ENCODE measurements at regions of chr14 and their contacts with region 1.

Region 1: DNA sequence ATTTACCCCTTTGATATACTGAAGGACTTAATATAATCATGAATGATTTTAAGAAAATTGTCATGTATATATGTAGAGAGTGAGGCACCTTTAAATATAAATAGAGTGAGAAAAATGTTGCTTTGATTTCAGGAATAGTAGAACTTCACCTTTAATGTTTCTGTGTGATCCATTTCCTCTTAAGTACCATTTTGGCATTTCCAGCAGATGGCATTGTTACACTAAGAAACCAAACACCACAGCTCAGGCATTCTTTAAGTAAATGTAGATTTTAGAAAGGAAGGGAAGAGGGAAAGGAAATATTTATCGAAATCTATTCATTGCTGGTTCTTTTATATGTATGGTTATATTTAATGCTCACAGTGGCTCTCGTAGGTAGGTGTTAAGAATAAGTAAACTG is 556.7 kb upstream of the FBXO33 start:
- DNase-seq: peak; percentile 43
- ATAC-seq: no peak
- H3K4me3 ChIP-seq: no peak overlapping the region
- H3K27ac ChIP-seq: no peak overlapping the region
- H3K4me1 ChIP-seq: no peaks in the 10 kb centered on the region
- H3K27me3 ChIP-seq: no peaks in the 10 kb centered on the region
- CTCF ChIP-seq: peak; percentile 19 to 59 (median 34); a peak in 4 of 6 replicates
- POLR2A ChIP-seq: no peak
- RAD21 ChIP-seq: peak; percentile 71

Region 2: DNA sequence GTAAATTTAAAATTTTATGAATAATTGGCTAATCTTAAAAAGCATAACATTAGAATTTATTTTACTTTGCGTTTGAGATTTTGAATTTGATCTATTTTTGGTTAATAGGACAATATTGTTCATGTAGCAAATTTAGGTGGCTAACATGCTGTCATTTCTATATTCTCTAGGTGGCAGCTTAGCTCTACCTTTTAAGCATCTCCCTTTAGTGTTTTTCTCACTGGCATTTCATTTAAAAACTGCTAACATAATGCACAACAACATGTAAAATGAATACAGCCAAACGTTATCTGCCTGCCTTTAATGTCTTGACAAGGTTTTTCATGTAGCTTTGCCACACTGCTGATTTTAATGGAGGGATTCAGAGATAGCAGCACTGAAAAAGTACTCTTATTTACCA is 284.3 kb before region 1 on chr14:
- CTCF ChIA-PET with region 1: no interaction called
- POLR2A ChIA-PET with region 1: no interaction called
- RAD21 ChIA-PET with region 1: no interaction called
- intact Hi-C with region 1: no loop called
- DNase-seq: no peak
- ATAC-seq: no peak
- H3K4me3 ChIP-seq: no peak overlapping the region
- H3K27ac ChIP-seq: no peak overlapping the region
- H3K4me1 ChIP-seq: no peaks in the 10 kb centered on the region
- H3K27me3 ChIP-seq: no peaks in the 10 kb centered on the region
- CTCF ChIP-seq: no peak; a peak in 1 of 6 replicates
- POLR2A ChIP-seq: no peak
- RAD21 ChIP-seq: 0 out of 2 replicates have a peak, but pooled peaks have one; percentile 13

Region 3: GRCh38 chr14:40697231-40697630 is 708.3 kb after region 1 on chr14:
- CTCF ChIA-PET with region 1: no interaction called
- POLR2A ChIA-PET with region 1: no interaction called
- RAD21 ChIA-PET with region 1: no interaction called
- intact Hi-C with region 1: loop called (anchors 10 kb)
- DNase-seq: no peak
- ATAC-seq: no peak
- H3K4me3 ChIP-seq: no peak overlapping the region
- H3K27ac ChIP-seq: no peak overlapping the region
- H3K4me1 ChIP-seq: no peaks in the 10 kb centered on the region
- H3K27me3 ChIP-seq: no peaks in the 10 kb centered on the region
- CTCF ChIP-seq: no peak
- POLR2A ChIP-seq: no peak
- RAD21 ChIP-seq: no peak

Measured in HCT116 (cell line).